Caco-2 (cell line): ENCODE measurements at regions of chr5 and their contacts with region 1.

Region 1: DNA sequence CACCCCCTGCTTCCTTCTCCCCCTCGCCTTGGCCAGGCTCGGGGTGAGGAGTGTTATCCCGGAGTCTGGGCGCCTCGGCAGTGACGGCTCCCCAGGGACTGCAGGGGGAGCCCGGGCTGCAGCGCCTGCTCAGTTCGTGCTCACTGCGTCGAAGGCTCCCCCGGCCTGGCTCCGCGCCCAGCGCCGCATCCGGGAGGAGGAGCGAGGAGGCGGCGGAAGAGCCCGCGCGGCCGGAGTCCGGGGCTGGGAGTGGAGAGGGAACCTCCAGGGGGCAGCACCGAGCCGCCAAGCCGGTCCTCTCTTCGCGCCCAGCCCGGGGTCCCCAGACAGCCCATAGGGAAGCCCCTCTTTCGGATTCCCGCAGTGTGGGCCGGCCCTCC is 1.3 kb upstream of the EGR1 start:
- DNase-seq: peak; percentile 92 to 95
- H3K4me3 ChIP-seq: peak overlapping the region; percentile 92
- H3K4me3 Mint-ChIP-seq: peak overlapping the region; percentile 73
- H3K27ac Mint-ChIP-seq: peak overlapping the region; percentile 96
- H3K4me1 ChIP-seq: no peaks in the 10 kb centered on the region; the same call in 1 of the 2 replicates
- H3K4me1 Mint-ChIP-seq: peaks cover 25% of the 10 kb centered on the region
- H3K27me3 ChIP-seq: no peaks in the 10 kb centered on the region
- H3K27me3 Mint-ChIP-seq: peaks cover 2% of the 10 kb centered on the region
- CTCF ChIP-seq: peak; percentile 65 to 97

Region 2: DNA sequence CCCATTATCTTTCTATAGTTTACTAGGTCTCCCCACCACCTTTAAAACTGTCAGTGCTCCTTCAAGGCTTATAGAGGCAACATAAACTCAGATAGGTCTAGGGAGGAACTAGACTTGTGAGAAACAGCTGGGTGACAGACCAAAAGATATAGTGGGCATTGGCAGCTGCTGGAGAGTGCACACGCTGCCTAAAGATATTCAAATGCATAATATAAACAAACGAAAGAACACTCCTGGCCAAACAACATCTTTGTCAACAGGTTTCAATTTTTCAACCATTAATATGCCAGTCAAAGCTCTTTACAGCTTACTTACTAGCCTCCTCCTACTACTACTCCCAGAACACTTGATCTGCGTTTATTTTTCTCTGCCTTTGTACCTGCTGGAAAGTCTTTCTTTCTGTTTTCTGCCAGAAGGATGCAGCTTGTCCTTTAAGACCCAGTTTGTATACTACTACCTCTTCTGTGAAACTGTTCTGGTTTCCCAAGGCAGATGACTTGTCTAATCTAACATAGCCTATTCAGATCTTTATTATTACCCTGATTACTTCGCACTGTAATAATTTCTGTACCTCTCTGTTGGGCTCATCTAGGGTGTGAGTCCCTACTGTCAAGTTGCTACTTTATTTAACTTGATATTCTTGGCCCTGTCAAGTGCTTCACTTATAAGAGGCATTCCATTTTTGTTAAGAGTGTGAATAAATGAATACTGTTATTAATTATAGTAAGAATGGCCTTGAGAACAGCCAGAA is 97.2 kb before region 1 on chr5:
- CTCF ChIA-PET with region 1: no interaction called
- POLR2A ChIA-PET with region 1: no interaction called
- intact Hi-C with region 1: no loop called
- DNase-seq: no peak
- H3K4me3 ChIP-seq: no peak overlapping the region
- H3K4me3 Mint-ChIP-seq: no peak overlapping the region
- H3K27ac Mint-ChIP-seq: no peak overlapping the region
- H3K4me1 ChIP-seq: no peaks in the 10 kb centered on the region
- H3K4me1 Mint-ChIP-seq: peaks cover 5% of the 10 kb centered on the region
- H3K27me3 ChIP-seq: no peaks in the 10 kb centered on the region
- H3K27me3 Mint-ChIP-seq: no peaks in the 10 kb centered on the region
- CTCF ChIP-seq: no peak

Region 3: GRCh38 chr5:138449501-138450239 is 14.3 kb before region 1 on chr5:
- CTCF ChIA-PET with region 1: interaction called, 3 read pairs
- POLR2A ChIA-PET with region 1: interaction called, 14 read pairs
- intact Hi-C with region 1: loop called (anchors 1 kb)
- DNase-seq: peak; percentile 84 to 92
- H3K4me3 ChIP-seq: no peak overlapping the region
- H3K4me3 Mint-ChIP-seq: no peak overlapping the region
- H3K27ac Mint-ChIP-seq: no peak overlapping the region
- H3K4me1 ChIP-seq: peaks cover 9% of the 10 kb centered on the region
- H3K4me1 Mint-ChIP-seq: no peaks in the 10 kb centered on the region
- H3K27me3 ChIP-seq: no peaks in the 10 kb centered on the region
- H3K27me3 Mint-ChIP-seq: no peaks in the 10 kb centered on the region
- CTCF ChIP-seq: peak; percentile 87 to 97

Region 4: DNA sequence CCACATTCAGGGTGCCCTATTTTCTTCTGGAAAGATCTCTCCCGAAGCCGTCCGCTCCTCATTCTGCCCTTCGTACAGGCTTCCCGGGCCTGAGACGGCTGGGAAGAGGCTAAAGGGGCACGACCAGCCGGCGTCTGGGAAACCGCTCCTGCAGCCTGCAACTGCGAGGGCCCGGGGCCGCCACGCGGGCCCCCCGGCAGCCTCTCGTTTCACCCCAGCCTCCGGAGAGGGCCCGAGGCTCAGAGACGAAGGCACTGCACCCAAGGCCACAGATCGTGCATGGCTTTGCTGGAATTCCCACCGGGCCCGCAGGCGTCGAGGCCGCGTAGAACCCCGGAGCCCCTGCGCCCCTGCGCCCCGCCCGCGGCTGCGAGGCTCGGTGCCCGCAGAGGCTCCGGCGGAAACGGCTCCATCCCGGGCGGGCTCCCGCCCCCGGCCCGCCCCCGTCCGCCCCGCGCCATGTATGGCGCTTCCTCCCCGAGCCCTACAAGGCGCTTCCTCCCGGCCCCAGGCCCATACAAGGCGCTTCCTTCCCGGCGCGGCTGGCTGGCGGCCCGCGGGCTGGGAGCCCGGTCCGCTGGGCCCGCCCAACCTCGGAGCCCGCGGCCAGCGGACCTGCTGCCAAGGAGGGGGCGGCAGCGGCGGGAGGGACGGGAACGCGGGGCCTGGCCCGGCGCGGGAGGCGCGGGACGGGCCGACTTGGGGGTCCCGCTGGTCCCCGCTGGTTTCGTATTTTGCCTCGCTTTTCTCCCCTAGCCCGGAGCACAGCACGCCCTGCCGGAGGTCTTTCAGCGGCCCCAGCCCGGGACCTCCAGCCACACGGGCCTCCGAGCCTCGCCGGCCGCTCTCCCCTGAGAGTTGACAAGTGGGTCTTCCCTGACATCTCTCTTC is 27.9 kb after region 1 on chr5:
- CTCF ChIA-PET with region 1: interaction called, 9 read pairs
- POLR2A ChIA-PET with region 1: interaction called, 6 read pairs
- intact Hi-C with region 1: loop called (anchors 1 kb)
- DNase-seq: peak; percentile 83 to 88
- H3K4me3 ChIP-seq: peak overlapping the region; percentile 54
- H3K4me3 Mint-ChIP-seq: peak overlapping the region; percentile 87
- H3K27ac Mint-ChIP-seq: peak overlapping the region; percentile 86
- H3K4me1 ChIP-seq: peaks cover 44% of the 10 kb centered on the region
- H3K4me1 Mint-ChIP-seq: peaks cover 16% of the 10 kb centered on the region
- H3K27me3 ChIP-seq: no peaks in the 10 kb centered on the region
- H3K27me3 Mint-ChIP-seq: peaks cover 3% of the 10 kb centered on the region
- CTCF ChIP-seq: no peak

Region 5: GRCh38 chr5:138610918-138611677 is 147.1 kb after region 1 on chr5:
- CTCF ChIA-PET with region 1: no interaction called
- POLR2A ChIA-PET with region 1: no interaction called
- intact Hi-C with region 1: no loop called
- DNase-seq: no peak
- H3K4me3 ChIP-seq: no peak overlapping the region
- H3K4me3 Mint-ChIP-seq: no peak overlapping the region
- H3K27ac Mint-ChIP-seq: no peak overlapping the region
- H3K4me1 ChIP-seq: peaks cover 10% of the 10 kb centered on the region; the same call in 1 of the 2 replicates
- H3K4me1 Mint-ChIP-seq: no peaks in the 10 kb centered on the region
- H3K27me3 ChIP-seq: no peaks in the 10 kb centered on the region
- H3K27me3 Mint-ChIP-seq: no peaks in the 10 kb centered on the region
- CTCF ChIP-seq: no peak

Region 6: DNA sequence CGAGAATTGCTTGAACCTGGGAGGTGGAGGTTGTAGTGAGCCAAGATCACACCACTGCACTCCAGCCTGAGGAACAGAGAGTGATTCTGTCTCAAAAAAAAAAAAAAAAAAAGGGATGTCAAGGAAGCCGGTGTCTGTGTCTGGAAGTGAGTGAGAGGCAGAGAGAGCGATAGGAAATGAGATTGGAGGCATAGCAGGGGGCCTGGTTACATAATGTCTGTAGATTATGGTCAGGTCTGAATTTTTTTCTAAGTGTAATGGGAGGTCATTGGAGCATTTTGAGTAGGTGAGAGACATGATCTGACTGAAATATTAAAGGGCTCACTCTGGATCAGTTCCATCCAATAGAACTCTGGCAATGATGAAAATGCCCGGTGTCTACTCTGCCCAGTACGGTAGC is 248.8 kb after region 1 on chr5:
- CTCF ChIA-PET with region 1: no interaction called
- POLR2A ChIA-PET with region 1: interaction called, 10 read pairs
- intact Hi-C with region 1: no loop called
- DNase-seq: no peak
- H3K4me3 ChIP-seq: no peak overlapping the region
- H3K4me3 Mint-ChIP-seq: no peak overlapping the region
- H3K27ac Mint-ChIP-seq: peak overlapping the region; percentile 5
- H3K4me1 ChIP-seq: peaks cover 32% of the 10 kb centered on the region
- H3K4me1 Mint-ChIP-seq: peaks cover 42% of the 10 kb centered on the region
- H3K27me3 ChIP-seq: no peaks in the 10 kb centered on the region
- H3K27me3 Mint-ChIP-seq: no peaks in the 10 kb centered on the region
- CTCF ChIP-seq: no peak